Activated CD8-positive, alpha-beta T cell treated with anti-CD3 and anti-CD28 coated beads for 36 hours (primary cell): ENCODE measurements at regions of chr1 and their contacts with region 1.

Region 1: DNA sequence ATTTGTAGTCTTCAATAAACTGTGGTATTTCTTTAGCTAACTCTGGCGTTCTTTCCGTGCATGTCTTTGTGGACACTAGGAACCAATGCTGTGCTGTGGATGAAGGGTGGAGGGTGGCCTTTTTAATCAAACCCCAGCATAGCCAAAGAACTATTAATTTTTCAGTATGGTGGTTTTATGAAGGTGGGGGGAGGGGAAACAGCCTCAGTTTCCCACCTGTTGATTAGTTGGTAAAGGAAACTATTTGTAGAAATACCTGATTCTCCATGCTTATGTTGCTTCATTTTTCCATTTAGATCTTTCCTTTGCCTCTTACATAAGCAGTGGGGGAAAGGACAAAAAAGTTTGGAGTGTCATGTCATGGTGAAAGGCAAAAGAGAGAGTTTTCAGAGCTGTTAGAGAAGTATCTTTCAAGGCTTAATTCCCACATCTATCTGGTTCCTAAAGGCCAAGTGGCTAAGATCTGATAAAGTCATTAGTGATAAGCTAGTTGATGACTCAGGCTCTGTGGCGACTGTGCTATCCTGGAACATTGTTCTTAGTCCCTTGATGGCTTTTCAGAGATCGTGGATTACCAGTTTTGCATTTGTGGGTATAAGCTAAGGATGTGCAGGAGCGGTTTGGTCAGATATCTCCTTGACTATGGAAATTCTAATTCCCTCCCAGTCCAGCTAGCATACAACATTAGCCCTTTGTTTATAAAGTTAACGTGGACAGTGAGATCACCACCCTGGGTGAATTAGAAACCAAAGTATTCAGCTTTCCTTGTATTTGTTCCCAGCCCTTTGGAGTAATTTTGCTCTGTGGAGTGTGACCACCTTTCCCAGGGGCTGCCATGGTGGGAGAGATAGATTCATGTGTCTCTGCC is 8.7 kb upstream of the HAX1 start:
- DNase-seq: peak; percentile 12
- ATAC-seq: no peak
- H3K4me3 Mint-ChIP-seq: no peak overlapping the region
- H3K27ac Mint-ChIP-seq: peak overlapping the region; percentile 78
- H3K4me1 Mint-ChIP-seq: peaks cover 52% of the 10 kb centered on the region
- H3K27me3 Mint-ChIP-seq: no peaks in the 10 kb centered on the region
- CTCF ChIP-seq: no peak

Region 2: GRCh38 chr1:154198756-154199562 is 64.7 kb before region 1 on chr1:
- CTCF ChIA-PET with region 1: interaction called, 12 read pairs
- POLR2A ChIA-PET with region 1: interaction called, 4 read pairs
- intact Hi-C with region 1: no loop called
- DNase-seq: peak; percentile 65
- ATAC-seq: peak; percentile 82
- H3K4me3 Mint-ChIP-seq: no peak overlapping the region
- H3K27ac Mint-ChIP-seq: no peak overlapping the region
- H3K4me1 Mint-ChIP-seq: no peaks in the 10 kb centered on the region
- H3K27me3 Mint-ChIP-seq: peaks cover 3% of the 10 kb centered on the region
- CTCF ChIP-seq: peak; percentile 69

Region 3: GRCh38 chr1:154288661-154289060 is 25.0 kb after region 1 on chr1:
- CTCF ChIA-PET with region 1: no interaction called
- POLR2A ChIA-PET with region 1: no interaction called
- intact Hi-C with region 1: no loop called
- DNase-seq: no peak
- ATAC-seq: no peak
- H3K4me3 Mint-ChIP-seq: no peak overlapping the region
- H3K27ac Mint-ChIP-seq: no peak overlapping the region
- H3K4me1 Mint-ChIP-seq: no peaks in the 10 kb centered on the region
- H3K27me3 Mint-ChIP-seq: no peaks in the 10 kb centered on the region
- CTCF ChIP-seq: no peak